Endothelial cell of umbilical vein (primary cell): ENCODE measurements at regions of chr12 and their contacts with region 1.

Region 1: GRCh38 chr12:59067083-59067482 is 146.8 kb upstream of the LRIG3 start:
- DNase-seq: peak; percentile 76
- H3K4me3 ChIP-seq: no peak overlapping the region
- H3K27ac ChIP-seq: no peak overlapping the region
- H3K4me1 ChIP-seq: peaks cover 32% of the 10 kb centered on the region
- H3K27me3 ChIP-seq: no peaks in the 10 kb centered on the region
- CTCF ChIP-seq: no peak
- POLR2A ChIP-seq: no peak

Region 2: GRCh38 chr12:58969237-58969636 is 97.8 kb before region 1 on chr12:
- CTCF ChIA-PET with region 1: no interaction called
- POLR2A ChIA-PET with region 1: no interaction called
- dilution Hi-C with region 1: no loop called
- intact Hi-C with region 1: no loop called
- DNase-seq: no peak
- H3K4me3 ChIP-seq: no peak overlapping the region
- H3K27ac ChIP-seq: no peak overlapping the region
- H3K4me1 ChIP-seq: no peaks in the 10 kb centered on the region
- H3K27me3 ChIP-seq: no peaks in the 10 kb centered on the region
- CTCF ChIP-seq: no peak
- POLR2A ChIP-seq: no peak

Region 3: DNA sequence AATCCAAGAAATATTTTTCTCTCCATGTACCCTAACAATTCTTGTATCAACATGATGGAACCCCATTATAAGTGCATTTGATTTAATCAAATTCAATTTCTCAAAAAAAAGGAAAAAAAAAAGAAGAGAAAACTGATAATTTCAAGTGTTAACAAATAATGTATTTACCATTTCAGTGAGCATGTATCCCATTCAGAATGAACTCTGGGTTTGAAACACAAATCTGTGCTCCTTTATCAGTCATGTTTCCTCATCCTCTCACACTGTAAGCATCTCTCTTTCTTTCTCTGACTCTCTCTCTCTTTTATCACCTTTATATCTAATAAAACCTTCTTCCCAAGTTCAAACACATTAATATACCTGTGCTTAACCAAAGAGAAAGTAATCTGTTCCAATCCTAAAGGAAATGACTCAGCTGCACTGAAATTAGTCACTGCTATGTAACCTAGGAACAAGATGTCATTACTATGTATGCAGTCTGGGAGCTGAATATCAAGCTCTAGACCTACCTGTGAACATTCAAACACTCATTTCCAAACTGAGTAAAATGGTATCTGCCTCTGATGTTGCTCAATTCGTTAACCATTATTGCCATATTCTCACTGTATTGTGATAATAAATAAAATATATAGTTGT is 11.8 kb before region 1 on chr12:
- CTCF ChIA-PET with region 1: interaction called, 14 read pairs
- POLR2A ChIA-PET with region 1: no interaction called
- dilution Hi-C with region 1: no loop called
- intact Hi-C with region 1: loop called (anchors 1 kb)
- DNase-seq: peak; percentile 90
- H3K4me3 ChIP-seq: peak overlapping the region in 1 of 3 experiments; percentile 27
- H3K27ac ChIP-seq: peak overlapping the region; percentile 76
- H3K4me1 ChIP-seq: peaks cover 26% of the 10 kb centered on the region
- H3K27me3 ChIP-seq: no peaks in the 10 kb centered on the region
- CTCF ChIP-seq: no peak
- POLR2A ChIP-seq: no peak

Region 4: GRCh38 chr12:60977966-60978365 is 1910.9 kb after region 1 on chr12:
- CTCF ChIA-PET with region 1: no interaction called
- POLR2A ChIA-PET with region 1: no interaction called
- dilution Hi-C with region 1: no loop called
- intact Hi-C with region 1: no loop called
- DNase-seq: no peak
- H3K4me3 ChIP-seq: no peak overlapping the region
- H3K27ac ChIP-seq: no peak overlapping the region
- H3K4me1 ChIP-seq: no peaks in the 10 kb centered on the region
- H3K27me3 ChIP-seq: no peaks in the 10 kb centered on the region
- CTCF ChIP-seq: no peak
- POLR2A ChIP-seq: no peak